WTC11 (cell line): ENCODE measurements at regions of chr17 and their contacts with region 1.

Region 1: GRCh38 chr17:74368092-74369081 is 1.1 kb downstream of the GPR142 start:
- DNase-seq: peak; percentile 79
- ATAC-seq: peak; percentile 81
- H3K4me3 Mint-ChIP-seq: no peak overlapping the region
- H3K27ac Mint-ChIP-seq: no peak overlapping the region
- H3K4me1 Mint-ChIP-seq: peaks cover 9% of the 10 kb centered on the region
- H3K27me3 Mint-ChIP-seq: peaks cover 2% of the 10 kb centered on the region; the same call in 1 of the 2 replicates
- CTCF ChIP-seq: peak; percentile 95

Region 2: DNA sequence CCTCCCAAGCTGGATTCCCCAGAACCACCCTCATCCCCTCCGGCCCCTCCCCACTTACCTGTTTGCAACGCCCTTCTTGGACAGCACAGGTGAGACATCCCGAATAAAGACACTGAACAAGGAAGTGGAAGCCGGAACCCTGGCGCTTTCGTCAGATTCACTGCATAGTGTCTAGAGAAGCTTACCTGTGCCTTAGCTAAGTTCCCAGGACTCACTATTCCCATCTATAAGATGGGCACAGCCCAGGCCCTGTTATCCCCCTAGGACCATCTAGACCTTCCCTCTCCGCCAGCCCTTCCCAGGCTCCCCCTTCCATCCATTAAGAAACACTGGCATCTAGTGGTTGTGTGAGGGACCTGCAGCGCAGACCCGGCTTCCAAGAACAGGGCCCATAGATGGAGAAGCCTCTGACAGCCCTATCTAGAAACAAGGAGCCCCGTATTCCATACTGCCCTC is 191.8 kb before region 1 on chr17:
- CTCF ChIA-PET with region 1: no interaction called
- POLR2A ChIA-PET with region 1: no interaction called
- DNase-seq: peak; percentile 81
- ATAC-seq: peak; percentile 89
- H3K4me3 Mint-ChIP-seq: no peak overlapping the region
- H3K27ac Mint-ChIP-seq: no peak overlapping the region
- H3K4me1 Mint-ChIP-seq: peaks cover 9% of the 10 kb centered on the region; the same call in 1 of the 2 replicates
- H3K27me3 Mint-ChIP-seq: peaks cover 4% of the 10 kb centered on the region
- CTCF ChIP-seq: peak; percentile 81

Region 3: DNA sequence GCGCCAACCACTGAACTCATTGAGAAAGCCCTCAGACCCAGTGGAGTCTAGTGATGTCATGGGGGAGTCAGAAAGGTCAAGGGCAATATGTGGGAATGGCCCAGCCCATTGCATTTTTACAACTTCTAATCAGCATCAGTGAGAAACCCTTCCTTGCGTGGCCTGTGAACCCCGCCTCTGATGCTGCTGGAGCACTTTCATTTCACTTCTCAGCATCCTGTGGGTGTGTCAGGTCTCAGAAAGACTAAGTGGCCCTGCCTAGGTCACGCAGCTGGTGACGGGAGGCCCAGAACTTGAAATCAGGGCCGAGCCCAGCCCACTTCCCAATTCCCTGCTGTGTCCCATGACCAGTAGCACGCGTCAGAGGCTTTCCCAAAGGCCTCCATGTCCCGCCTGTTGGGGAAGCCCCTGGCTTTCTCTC is 88.3 kb before region 1 on chr17:
- CTCF ChIA-PET with region 1: interaction called, 19 read pairs
- POLR2A ChIA-PET with region 1: no interaction called
- DNase-seq: no peak
- ATAC-seq: no peak
- H3K4me3 Mint-ChIP-seq: no peak overlapping the region
- H3K27ac Mint-ChIP-seq: peak overlapping the region; percentile 27; the same call in 1 of the 2 replicates
- H3K4me1 Mint-ChIP-seq: peaks cover 4% of the 10 kb centered on the region; the same call in 1 of the 2 replicates
- H3K27me3 Mint-ChIP-seq: peaks cover 9% of the 10 kb centered on the region
- CTCF ChIP-seq: no peak

Region 4: DNA sequence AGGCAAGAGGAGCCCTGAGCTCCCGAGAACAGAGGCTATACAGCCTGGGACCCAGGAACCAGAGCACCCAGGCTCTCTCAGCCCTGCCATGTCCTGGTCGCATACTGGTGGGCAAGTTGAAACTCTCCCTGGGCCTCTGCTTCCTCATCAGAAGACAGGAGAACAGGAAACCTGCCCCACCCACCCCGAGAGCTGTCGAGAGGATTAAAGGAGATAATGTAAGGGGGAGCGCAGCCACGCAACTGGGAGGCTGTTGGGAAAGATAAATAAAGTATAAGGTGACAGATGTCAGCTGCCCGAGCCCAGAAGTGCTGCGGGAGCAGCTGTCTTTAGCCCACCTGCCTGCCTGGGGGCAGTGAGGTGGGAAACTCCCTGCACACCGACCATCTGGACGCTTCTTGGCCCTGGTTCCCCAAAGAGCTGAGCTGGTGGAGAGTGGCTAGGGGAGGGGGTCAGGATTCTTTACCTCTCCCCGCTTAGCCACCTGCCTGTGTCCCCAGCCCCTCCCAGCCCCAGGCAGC is 35.6 kb before region 1 on chr17:
- CTCF ChIA-PET with region 1: interaction called, 12 read pairs
- POLR2A ChIA-PET with region 1: no interaction called
- DNase-seq: no peak
- ATAC-seq: 0 out of 2 replicates have a peak, but pooled peaks have one; percentile 18
- H3K4me3 Mint-ChIP-seq: no peak overlapping the region
- H3K27ac Mint-ChIP-seq: no peak overlapping the region
- H3K4me1 Mint-ChIP-seq: peaks cover 21% of the 10 kb centered on the region
- H3K27me3 Mint-ChIP-seq: peaks cover 1% of the 10 kb centered on the region
- CTCF ChIP-seq: no peak

Region 5: DNA sequence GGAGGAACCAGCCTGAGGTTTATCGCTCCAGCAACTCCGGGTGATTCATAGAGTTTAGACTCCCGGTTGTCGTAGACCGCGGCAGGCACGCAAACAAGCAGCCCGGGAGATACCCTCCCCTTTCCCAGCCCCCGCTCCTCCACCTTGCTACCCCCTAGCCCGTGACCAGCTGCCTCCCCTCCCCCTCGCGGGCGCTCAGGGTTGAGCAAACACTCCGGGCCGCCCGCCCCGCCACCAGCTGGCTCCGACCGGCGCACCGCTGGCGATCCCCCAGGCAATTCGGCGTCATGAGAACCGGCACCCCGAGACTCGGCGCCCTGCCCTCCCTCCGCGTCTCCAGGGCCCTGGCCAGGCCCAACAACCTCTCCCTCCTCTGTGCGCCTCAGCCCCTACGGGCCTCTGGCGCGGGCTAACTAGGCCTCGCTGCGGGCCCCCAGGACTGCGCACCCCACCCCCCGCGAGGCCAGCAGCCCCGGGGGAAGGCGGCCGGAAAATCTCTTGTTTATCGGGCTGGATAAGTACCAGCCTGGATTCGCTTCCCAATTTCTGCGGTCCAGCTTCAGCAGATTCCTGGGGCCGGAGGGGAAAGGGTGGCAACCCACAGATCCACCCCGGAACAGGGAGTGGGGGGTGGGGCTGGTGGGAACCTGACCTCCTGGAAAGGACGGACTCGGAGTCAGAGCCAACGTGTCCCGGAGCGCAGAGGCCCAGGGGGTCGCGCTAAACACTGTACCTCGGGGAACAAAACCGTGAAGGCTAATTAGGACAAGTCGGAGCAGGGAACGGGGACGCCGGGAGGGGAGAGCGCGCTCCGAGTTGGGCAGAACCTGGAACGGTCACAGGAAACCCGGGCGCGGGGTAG is 62.5 kb after region 1 on chr17:
- CTCF ChIA-PET with region 1: interaction called, 24 read pairs
- POLR2A ChIA-PET with region 1: no interaction called
- DNase-seq: peak; percentile 77
- ATAC-seq: peak; percentile 7
- H3K4me3 Mint-ChIP-seq: peak overlapping the region; percentile 84
- H3K27ac Mint-ChIP-seq: peak overlapping the region; percentile 53
- H3K4me1 Mint-ChIP-seq: peaks cover 39% of the 10 kb centered on the region
- H3K27me3 Mint-ChIP-seq: peaks cover 37% of the 10 kb centered on the region
- CTCF ChIP-seq: no peak

Region 6: DNA sequence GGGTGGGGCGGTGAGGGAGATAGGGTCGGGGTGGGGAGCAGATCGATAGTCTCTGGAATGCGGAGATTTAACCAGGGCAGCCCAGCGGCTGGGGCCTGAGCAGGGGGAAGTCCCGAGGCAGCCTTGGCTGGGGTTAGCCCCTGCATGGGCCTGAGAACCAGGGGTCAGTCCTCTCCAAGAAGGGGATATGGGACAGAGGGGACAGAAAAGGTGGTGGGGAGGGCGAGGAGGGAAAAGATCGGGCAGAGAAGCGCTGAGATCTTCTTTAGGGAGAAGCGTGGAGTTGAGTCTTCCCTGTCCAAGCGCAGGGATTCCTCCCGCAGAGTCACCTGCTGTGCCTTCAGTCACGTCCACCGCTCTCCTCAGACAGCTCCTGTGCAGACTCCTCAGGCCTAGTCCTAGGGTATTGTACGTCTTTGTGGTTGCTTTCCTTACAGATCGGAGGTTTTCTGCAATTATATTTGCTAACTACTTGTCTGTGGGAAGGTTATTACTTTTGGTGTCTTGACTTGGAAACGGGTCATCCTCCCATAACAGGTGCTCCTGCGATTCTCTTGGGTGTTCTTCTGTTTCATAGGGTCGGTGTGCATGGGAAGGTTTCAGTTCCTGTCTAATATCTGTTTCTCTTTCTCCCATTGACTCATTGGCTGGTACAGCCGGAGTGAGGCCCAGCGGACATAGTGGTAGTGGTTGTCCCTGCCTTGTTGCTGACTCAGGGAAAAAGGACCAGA is 99.0 kb after region 1 on chr17:
- CTCF ChIA-PET with region 1: interaction called, 17 read pairs
- POLR2A ChIA-PET with region 1: no interaction called
- DNase-seq: no peak
- ATAC-seq: peak; percentile 61
- H3K4me3 Mint-ChIP-seq: peak overlapping the region; percentile 59
- H3K27ac Mint-ChIP-seq: no peak overlapping the region
- H3K4me1 Mint-ChIP-seq: peaks cover 4% of the 10 kb centered on the region
- H3K27me3 Mint-ChIP-seq: peaks cover 17% of the 10 kb centered on the region
- CTCF ChIP-seq: no peak

Region 7: DNA sequence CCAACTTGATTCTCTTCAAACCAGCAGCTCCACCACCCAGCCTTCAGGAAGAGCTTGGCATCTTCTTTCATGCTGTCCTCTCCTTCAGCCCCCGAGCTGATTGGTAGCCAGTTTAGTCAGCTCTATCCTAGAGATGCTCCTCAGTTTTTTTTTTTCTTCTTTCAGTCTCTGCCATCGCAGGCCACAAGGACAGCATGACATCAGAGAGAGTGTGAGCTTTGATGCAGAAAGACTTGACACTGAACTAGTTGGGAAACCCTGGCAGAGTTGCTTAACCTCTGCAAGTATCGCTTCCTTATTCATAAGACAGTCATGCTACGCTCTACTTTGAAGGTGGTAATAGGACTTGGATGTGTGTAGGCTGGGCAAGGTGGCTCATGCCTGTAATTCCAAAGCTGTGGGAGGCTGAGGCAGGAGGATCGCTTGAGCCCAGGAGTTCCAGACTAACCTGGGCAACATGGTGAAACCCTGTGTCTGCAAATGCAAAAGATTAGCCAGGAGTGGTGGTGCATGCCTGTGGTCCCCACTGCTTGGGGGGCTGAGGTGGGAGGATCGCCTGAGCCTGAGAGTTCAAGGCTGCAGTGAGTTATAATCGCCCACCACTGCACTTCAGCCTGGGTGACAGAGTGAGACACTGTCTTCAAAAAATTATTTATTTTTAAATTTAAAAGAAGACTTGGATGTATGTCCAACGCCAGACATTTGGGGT is 160.3 kb after region 1 on chr17:
- CTCF ChIA-PET with region 1: interaction called, 32 read pairs
- POLR2A ChIA-PET with region 1: no interaction called
- DNase-seq: no peak
- ATAC-seq: no peak
- H3K4me3 Mint-ChIP-seq: no peak overlapping the region
- H3K27ac Mint-ChIP-seq: no peak overlapping the region
- H3K4me1 Mint-ChIP-seq: peaks cover 13% of the 10 kb centered on the region
- H3K27me3 Mint-ChIP-seq: peaks cover 36% of the 10 kb centered on the region
- CTCF ChIP-seq: no peak

Region 8: GRCh38 chr17:74659898-74660297 is 291.5 kb after region 1 on chr17:
- CTCF ChIA-PET with region 1: interaction called, 14 read pairs
- POLR2A ChIA-PET with region 1: no interaction called
- DNase-seq: no peak
- ATAC-seq: no peak
- H3K4me3 Mint-ChIP-seq: no peak overlapping the region
- H3K27ac Mint-ChIP-seq: no peak overlapping the region
- H3K4me1 Mint-ChIP-seq: peaks cover 20% of the 10 kb centered on the region
- H3K27me3 Mint-ChIP-seq: no peaks in the 10 kb centered on the region; the same call in none of the 2 replicates
- CTCF ChIP-seq: no peak